Activated CD8-positive, alpha-beta T cell treated with anti-CD3 and anti-CD28 coated beads for 36 hours (primary cell): ENCODE measurements at regions of chr4 and their contacts with region 1.

Region 1: GRCh38 chr4:56828784-56829535 is 7.5 kb upstream of the SPINK2 start:
- DNase-seq: no peak
- ATAC-seq: no peak
- H3K4me3 Mint-ChIP-seq: no peak overlapping the region
- H3K27ac Mint-ChIP-seq: no peak overlapping the region
- H3K4me1 Mint-ChIP-seq: peaks cover 13% of the 10 kb centered on the region
- H3K27me3 Mint-ChIP-seq: no peaks in the 10 kb centered on the region
- CTCF ChIP-seq: no peak

Region 2: DNA sequence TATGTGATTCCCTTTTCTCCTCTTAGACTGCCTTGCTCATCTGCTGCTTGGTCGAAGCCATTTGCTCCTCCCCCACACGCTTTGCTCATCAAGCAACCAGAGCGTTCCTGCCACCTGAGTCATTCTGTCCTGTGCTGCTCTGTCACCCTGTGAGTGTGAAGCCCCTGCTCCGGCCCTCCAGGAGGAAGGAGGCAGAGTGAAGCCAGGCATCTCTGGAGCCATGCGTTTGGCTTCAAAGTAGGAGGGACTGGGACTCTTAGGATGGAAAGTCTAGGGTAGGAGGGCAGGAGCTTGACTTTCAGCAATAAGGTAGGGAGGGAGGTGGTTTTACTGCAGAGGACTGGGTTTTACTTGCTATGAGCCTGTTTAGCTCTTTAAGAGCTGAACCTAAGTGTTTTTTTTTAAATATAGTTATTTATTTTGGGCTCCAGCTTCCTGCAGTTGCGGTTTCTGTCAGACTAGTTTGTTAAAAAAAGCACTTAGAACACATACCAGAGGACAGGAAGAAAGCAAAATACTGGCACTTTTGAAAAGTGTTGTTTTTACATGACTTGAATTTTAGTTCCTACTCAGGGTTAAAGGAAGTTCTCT is 71.0 kb before region 1 on chr4:
- CTCF ChIA-PET with region 1: no interaction called
- POLR2A ChIA-PET with region 1: no interaction called
- intact Hi-C with region 1: loop called (anchors 10 kb)
- DNase-seq: peak; percentile 92
- ATAC-seq: peak; percentile 100
- H3K4me3 Mint-ChIP-seq: peak overlapping the region; percentile 63
- H3K27ac Mint-ChIP-seq: peak overlapping the region; percentile 96
- H3K4me1 Mint-ChIP-seq: peaks cover 46% of the 10 kb centered on the region
- H3K27me3 Mint-ChIP-seq: no peaks in the 10 kb centered on the region
- CTCF ChIP-seq: no peak

Region 3: GRCh38 chr4:56786955-56787354 is 42.0 kb before region 1 on chr4:
- CTCF ChIA-PET with region 1: no interaction called
- POLR2A ChIA-PET with region 1: no interaction called
- intact Hi-C with region 1: no loop called
- DNase-seq: no peak
- ATAC-seq: no peak
- H3K4me3 Mint-ChIP-seq: no peak overlapping the region
- H3K27ac Mint-ChIP-seq: no peak overlapping the region
- H3K4me1 Mint-ChIP-seq: no peaks in the 10 kb centered on the region
- H3K27me3 Mint-ChIP-seq: no peaks in the 10 kb centered on the region
- CTCF ChIP-seq: no peak